Posterior cingulate gyrus (tissue), 11 donors: ENCODE measurements at regions of chr3 and their contacts with region 1.

Region 1: DNA sequence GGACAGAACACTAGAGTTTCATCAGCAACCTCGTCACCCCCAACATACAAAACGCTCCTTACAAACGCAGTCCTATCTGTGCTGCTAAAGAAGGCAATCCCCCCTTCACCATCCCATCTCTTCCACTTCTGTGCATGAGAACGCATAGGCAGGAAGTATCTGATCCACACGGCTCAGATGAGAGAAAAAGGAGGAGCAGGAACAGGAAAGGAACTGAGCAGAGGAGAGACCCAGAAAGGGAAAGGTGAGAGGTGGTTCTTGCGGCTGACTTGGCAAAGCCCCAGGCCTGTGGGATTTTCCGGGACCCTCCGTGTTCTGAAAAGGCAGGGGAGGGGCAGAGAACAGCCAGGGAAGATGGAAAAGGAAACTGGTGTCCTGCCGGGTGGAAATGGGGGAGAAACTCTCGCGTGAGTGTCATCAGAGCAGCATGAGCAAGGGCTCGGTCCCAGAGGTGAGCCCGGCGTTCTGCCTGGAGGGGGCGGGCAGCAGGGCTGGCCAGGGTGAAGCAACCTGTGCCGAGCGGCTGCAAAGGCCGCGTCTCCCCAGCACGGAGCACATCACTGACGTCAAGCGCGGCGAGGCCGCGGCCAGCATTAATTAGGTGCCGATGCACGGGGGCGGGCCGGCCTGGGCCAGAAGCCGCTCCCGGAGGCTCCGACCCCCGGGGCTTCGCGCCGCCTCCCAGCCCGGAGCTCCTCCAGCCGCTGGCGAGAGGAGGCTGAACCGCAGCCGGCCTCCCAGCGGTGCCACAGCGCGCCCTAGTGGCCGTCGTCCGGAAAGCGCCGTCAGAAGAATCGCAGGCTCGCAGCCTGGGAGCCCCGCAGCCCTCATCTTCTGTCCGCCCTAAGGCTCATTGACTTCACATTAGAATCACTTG is 35.8 kb downstream of the CPN2 start:
- DNase-seq: peak; percentile 74 to 98 (median 88)

Region 2: GRCh38 chr3:193780810-193781472 is 534.4 kb before region 1 on chr3:
- intact Hi-C with region 1: loop called (anchors 1 kb)
- DNase-seq: peak in 9 of 10 donors; percentile 27 to 91 (median 58)

Region 3: GRCh38 chr3:193960487-193961274 is 354.6 kb before region 1 on chr3:
- intact Hi-C with region 1: loop called (anchors 10 kb)
- DNase-seq: peak in 5 of 10 donors; percentile 23 to 48 (median 33)

Region 4: DNA sequence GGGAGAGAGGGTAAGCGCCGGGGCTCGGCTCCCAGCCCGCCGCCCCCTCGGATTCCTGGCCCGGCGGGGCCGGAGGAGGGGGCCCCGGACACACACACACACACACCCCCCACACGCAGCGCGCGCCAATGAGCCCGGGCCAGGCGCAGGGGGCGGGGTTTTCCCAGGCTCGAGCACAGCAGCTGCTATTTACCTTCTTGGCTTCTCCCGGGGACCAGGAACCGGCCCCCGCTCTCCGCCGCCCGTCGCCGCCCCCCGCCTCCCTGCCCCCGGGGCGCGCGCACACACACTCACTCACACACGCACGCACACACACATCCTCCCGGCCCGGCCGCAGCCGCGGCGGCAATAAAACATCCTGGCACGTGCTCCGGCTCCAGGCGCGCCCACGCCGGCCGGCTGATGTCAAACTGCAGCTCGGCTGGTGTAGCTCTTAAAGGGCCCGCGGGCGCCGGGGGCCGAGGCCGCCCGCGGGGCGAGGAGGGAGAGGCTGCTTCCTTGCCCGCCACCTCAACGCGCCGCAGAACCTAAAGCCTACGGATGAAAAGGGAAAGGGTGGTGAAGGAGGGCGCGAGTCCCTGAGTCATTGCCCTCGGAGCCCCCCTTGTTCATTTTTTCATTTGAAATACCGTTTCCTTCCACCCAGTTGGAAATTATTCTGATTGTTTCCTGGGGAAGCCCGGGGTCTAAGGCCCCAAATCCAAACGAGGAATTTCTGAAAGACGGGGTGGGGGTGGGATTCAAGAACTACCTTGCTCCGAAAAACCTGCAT is 180.4 kb before region 1 on chr3:
- intact Hi-C with region 1: loop called (anchors 5 kb)
- DNase-seq: peak; percentile 56 to 95 (median 72)